ENCODE measurements at regions of chr5 and their contacts with region 1.

Region 1: DNA sequence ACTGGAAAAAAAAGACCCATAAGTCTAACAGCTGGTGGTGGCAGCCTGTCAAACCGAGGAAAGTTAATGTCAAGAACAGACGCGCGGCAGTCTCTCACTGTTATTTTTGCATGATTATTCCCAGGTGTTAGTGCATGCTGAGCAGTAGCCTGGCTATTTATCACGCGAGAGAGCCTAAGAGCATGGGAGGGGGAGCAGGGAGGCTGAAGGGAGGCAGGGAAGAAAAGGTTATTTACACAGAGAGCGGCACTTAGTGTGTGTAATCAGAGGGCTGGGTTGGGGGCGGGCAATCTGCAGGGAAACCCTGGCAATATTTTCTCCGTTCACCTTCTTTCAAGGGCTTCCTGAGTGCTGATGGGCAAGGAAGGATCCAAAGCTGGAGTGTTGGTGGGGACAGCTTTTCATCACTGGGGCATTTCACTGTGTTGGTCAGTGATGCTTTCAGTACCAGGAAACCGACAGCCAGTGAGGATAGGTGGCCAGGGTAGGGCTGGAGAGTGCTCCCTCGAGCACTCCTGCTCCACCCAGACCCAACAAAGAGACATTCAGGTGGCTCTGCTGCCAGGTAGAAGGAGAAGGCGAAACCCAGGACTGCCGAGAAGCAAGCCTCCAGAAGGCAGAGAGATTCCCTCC is 39.6 kb downstream of the ZNF608 start:
- DNase-seq: no peak
- ATAC-seq: no peak
- H3K4me3 Mint-ChIP-seq: peak overlapping the region; percentile 67
- H3K27ac Mint-ChIP-seq: peak overlapping the region; percentile 89
- H3K4me1 Mint-ChIP-seq: peaks cover 92% of the 10 kb centered on the region
- H3K27me3 Mint-ChIP-seq: no peaks in the 10 kb centered on the region
- CTCF ChIP-seq: no peak

Region 2: GRCh38 chr5:124410539-124411488 is 296.0 kb before region 1 on chr5:
- CTCF ChIA-PET with region 1: no interaction called
- POLR2A ChIA-PET with region 1: no interaction called
- intact Hi-C with region 1: loop called (anchors 2 kb)
- DNase-seq: no peak
- ATAC-seq: peak; percentile 96
- H3K4me3 Mint-ChIP-seq: peak overlapping the region; percentile 51
- H3K27ac Mint-ChIP-seq: no peak overlapping the region
- H3K4me1 Mint-ChIP-seq: peaks cover 24% of the 10 kb centered on the region
- H3K27me3 Mint-ChIP-seq: peaks cover 3% of the 10 kb centered on the region
- CTCF ChIP-seq: no peak

Region 3: DNA sequence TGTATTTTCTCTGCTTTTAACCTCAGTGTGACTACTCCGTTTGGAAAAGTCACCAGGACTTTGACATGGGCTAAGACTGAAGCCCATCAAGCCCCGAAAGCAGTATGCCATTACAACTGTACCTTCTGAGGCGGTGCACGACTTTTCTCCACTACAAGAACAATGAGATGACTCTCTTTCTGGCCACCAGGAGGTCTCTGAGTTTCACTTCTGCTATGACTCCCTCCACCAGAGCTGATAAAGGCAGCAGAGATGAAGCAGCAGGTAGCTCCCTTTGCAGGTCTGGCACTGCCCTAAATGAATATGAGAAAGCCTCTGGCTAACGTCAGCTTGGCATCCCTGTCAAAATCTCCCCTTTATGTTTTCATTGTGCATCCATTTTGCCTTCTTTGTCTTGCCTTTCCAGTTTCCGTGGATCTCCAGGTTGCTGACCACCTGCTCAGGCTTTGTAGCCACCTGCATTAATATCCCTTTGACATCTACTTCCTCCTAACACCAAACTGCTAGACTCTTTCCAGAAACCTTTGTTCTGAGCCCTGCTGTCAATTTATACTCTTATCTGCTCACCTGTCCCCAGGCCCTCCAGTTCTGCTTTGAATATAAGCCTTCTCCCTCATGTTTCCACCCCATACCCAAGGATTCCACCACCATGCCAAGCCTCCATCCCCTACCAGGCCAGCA is 182.2 kb before region 1 on chr5:
- CTCF ChIA-PET with region 1: no interaction called
- POLR2A ChIA-PET with region 1: no interaction called
- intact Hi-C with region 1: loop called (anchors 2 kb)
- DNase-seq: no peak
- ATAC-seq: peak; percentile 92
- H3K4me3 Mint-ChIP-seq: no peak overlapping the region
- H3K27ac Mint-ChIP-seq: peak overlapping the region; percentile 3
- H3K4me1 Mint-ChIP-seq: peaks cover 35% of the 10 kb centered on the region
- H3K27me3 Mint-ChIP-seq: peaks cover 9% of the 10 kb centered on the region
- CTCF ChIP-seq: no peak

Region 4: DNA sequence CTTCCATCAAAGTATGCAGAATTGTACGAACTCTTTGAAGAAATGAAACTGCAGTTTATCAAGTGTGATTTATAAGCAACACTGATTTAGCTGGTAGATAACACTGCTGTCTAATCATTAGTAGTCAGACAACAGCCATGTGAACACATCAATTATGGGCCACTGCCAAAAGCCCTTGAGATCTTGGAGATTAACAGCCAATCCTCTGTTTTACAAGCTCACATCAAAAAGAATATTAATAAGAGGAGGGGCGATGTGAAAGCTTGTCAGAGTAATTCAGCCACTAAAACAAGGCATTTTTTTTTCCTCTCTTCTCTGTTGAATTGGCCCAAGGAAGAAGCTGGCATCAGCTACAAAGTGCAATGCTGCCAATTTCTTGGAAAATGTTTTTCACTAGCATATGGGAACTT is 11.5 kb after region 1 on chr5:
- CTCF ChIA-PET with region 1: interaction called, 6 read pairs
- POLR2A ChIA-PET with region 1: interaction called, 77 read pairs
- intact Hi-C with region 1: loop called (anchors 1 kb)
- DNase-seq: no peak
- ATAC-seq: no peak
- H3K4me3 Mint-ChIP-seq: peak overlapping the region; percentile 37
- H3K27ac Mint-ChIP-seq: peak overlapping the region; percentile 65
- H3K4me1 Mint-ChIP-seq: peaks cover 60% of the 10 kb centered on the region
- H3K27me3 Mint-ChIP-seq: no peaks in the 10 kb centered on the region
- CTCF ChIP-seq: no peak

Region 5: GRCh38 chr5:124824637-124825158 is 117.9 kb after region 1 on chr5:
- CTCF ChIA-PET with region 1: no interaction called
- POLR2A ChIA-PET with region 1: no interaction called
- intact Hi-C with region 1: loop called (anchors 5 kb)
- DNase-seq: no peak
- ATAC-seq: no peak
- H3K4me3 Mint-ChIP-seq: no peak overlapping the region
- H3K27ac Mint-ChIP-seq: peak overlapping the region; percentile 74
- H3K4me1 Mint-ChIP-seq: peaks cover 17% of the 10 kb centered on the region
- H3K27me3 Mint-ChIP-seq: no peaks in the 10 kb centered on the region
- CTCF ChIP-seq: no peak

Region 6: GRCh38 chr5:124920909-124921666 is 214.2 kb after region 1 on chr5:
- CTCF ChIA-PET with region 1: no interaction called
- POLR2A ChIA-PET with region 1: interaction called, 4 read pairs
- intact Hi-C with region 1: loop called (anchors 1 kb)
- DNase-seq: no peak
- ATAC-seq: peak; percentile 83
- H3K4me3 Mint-ChIP-seq: no peak overlapping the region
- H3K27ac Mint-ChIP-seq: no peak overlapping the region
- H3K4me1 Mint-ChIP-seq: peaks cover 10% of the 10 kb centered on the region
- H3K27me3 Mint-ChIP-seq: no peaks in the 10 kb centered on the region
- CTCF ChIP-seq: no peak

Region 7: GRCh38 chr5:125026896-125027732 is 320.3 kb after region 1 on chr5:
- CTCF ChIA-PET with region 1: no interaction called
- POLR2A ChIA-PET with region 1: no interaction called
- intact Hi-C with region 1: no loop called
- DNase-seq: no peak
- ATAC-seq: no peak
- H3K4me3 Mint-ChIP-seq: no peak overlapping the region
- H3K27ac Mint-ChIP-seq: no peak overlapping the region
- H3K4me1 Mint-ChIP-seq: peaks cover 6% of the 10 kb centered on the region
- H3K27me3 Mint-ChIP-seq: no peaks in the 10 kb centered on the region
- CTCF ChIP-seq: no peak